Left colon (tissue), 2 donors: ENCODE measurements at regions of chr19 and their contacts with region 1.

Region 1: GRCh38 chr19:32971715-32972540 is at the starts of genes CEP89 and FAAP24:
- DNase-seq: peak; percentile 97 to 98
- ATAC-seq: peak; percentile 93
- total RNA-seq, gene CEP89: 10.8 to 11.4 TPM
- total RNA-seq, gene FAAP24: 1.0 to 1.5 TPM

Region 2: GRCh38 chr19:33005420-33005819 is 33.5 kb after region 1 on chr19:
- intact Hi-C with region 1: no loop called
- DNase-seq: no peak
- ATAC-seq: peak; percentile 63

Region 3: DNA sequence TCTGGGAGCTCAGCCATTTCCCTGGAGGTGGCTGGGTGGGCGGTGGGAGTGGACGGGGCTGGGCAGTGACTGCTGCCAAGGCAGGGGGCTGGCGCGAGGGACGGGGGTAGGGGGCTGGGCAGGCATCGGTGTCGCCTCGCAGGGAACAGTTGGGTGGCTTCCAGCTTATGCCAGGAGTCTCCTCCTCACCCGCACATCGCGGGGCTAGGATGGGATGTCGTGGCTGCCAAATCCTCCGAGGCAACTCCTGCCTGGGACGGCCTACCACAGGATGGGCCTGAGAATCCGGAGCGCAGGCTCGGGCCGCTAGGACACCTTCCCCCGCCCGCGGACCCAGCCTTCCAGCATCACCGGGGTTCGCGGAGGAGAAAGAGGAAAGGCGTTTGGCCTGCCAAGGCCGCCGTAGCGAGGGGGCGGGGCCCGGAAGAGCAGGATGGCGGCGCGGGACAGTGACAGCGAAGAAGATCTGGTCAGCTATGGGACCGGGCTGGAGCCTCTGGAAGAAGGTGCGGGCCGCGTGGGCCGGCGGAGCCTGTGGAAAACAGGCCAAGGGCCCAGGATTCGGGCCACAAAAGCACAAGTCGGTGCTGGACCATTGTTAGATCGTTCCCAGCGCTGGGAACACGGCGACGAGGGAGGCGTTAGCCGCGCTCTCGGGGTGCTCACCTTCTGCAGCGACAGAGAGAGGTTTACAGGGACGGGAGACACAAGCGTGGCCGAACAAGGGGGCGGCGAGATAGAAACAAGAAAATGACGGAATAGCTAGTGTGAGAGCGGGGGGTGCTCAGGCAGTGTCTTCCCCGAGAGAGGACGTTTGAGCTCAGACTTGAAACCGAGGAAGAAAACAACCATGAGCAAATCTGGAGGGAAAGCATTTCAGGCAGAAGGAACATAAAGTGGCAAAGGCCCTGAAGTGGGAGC is 109.1 kb after region 1 on chr19 and contains the start of gene GPATCH1:
- intact Hi-C with region 1: loop called in 1 of 2 experiments (anchors 10 kb)
- DNase-seq: peak; percentile 85 to 92
- ATAC-seq: peak; percentile 87
- total RNA-seq, gene GPATCH1: 8.3 to 10.9 TPM

Region 4: GRCh38 chr19:33132425-33132824 is 160.5 kb after region 1 on chr19:
- intact Hi-C with region 1: no loop called
- DNase-seq: no peak
- ATAC-seq: peak; percentile 20